ENCODE measurements at regions of chr19 and their contacts with region 1.

Region 1: GRCh38 chr19:19192078-19192882 is at the starts of genes BORCS8 and RFXANK:
- DNase-seq: peak; percentile 97
- ATAC-seq: peak; percentile 94
- H3K4me3 ChIP-seq: peak within 1 kb of the TSS; percentile 85
- H3K27ac ChIP-seq: peak within 1 kb of the TSS; percentile 97
- H3K4me1 ChIP-seq: peaks cover 11% of the 10 kb centered on the region
- H3K27me3 ChIP-seq: no peaks in the 10 kb centered on the region
- CTCF ChIP-seq: no peak
- EP300 ChIP-seq: no peak
- POLR2A ChIP-seq: peak; percentile 86
- RAD21 ChIP-seq: no peak
- polyA plus RNA-seq, gene BORCS8: 3.7 to 6.0 TPM
- polyA plus RNA-seq, gene RFXANK: 70.8 TPM

Region 2: GRCh38 chr19:19203012-19203856 is 11.0 kb after region 1 on chr19 and contains the start of gene NR2C2AP:
- CTCF ChIA-PET with region 1: interaction called, 3 read pairs
- POLR2A ChIA-PET with region 1: interaction called, 25 read pairs
- RAD21 ChIA-PET with region 1: interaction called, 15 read pairs
- SMC1A ChIA-PET with region 1: interaction called, 12 read pairs
- in situ Hi-C with region 1: no loop called
- intact Hi-C with region 1: no loop called
- DNase-seq: peak; percentile 73
- ATAC-seq: peak; percentile 94
- H3K4me3 ChIP-seq: peak within 1 kb of the TSS; percentile 93
- H3K27ac ChIP-seq: peak within 1 kb of the TSS; percentile 75
- H3K4me1 ChIP-seq: peaks cover 8% of the 10 kb centered on the region; the same call in 1 of the 2 replicates
- H3K27me3 ChIP-seq: no peaks in the 10 kb centered on the region
- CTCF ChIP-seq: no peak
- EP300 ChIP-seq: no peak
- POLR2A ChIP-seq: peak; percentile 56; the same call in 1 of the 2 replicates
- RAD21 ChIP-seq: no peak
- polyA plus RNA-seq, gene NR2C2AP: 43.3 to 44.8 TPM

Region 3: DNA sequence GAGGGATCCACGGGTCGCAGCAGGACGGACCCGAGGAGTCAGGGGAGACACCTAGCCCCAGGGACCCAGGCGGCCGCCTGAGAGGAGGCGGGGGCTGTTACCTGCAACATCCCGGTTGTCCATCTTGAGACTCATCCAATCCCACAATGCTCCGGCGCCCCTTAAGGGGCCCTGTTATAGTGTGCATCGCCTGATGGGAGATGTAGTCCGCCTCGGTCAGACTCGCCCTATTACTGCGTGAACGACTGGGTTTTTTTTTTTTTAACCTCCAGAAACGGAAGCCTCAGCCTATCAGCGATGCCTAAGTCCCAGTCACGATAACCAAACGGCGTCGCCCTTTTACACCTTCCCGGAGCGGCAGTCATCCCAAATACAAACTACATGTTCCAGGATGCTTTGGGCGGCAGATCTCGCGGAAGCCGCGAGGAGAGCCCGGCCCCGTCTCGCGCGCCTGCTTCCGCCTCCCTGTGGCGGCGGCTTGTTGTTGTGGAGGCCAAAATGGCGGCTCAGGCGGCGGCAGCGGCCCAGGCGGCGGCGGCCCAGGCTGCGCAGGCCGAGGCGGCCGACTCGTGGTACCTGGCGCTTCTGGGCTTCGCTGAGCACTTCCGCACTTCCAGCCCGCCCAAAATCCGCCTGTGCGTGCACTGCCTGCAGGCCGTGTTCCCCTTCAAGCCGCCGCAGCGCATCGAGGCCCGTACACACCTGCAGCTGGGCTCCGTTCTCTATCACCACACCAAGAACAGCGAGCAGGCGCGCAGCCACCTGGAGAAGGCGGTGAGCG is 128.3 kb after region 1 on chr19 and contains the starts of genes MAU2 and SUGP1:
- CTCF ChIA-PET with region 1: no interaction called
- POLR2A ChIA-PET with region 1: no interaction called
- RAD21 ChIA-PET with region 1: no interaction called
- SMC1A ChIA-PET with region 1: interaction called, 3 read pairs
- in situ Hi-C with region 1: no loop called
- intact Hi-C with region 1: loop called (anchors 2 kb)
- DNase-seq: peak; percentile 80
- ATAC-seq: peak; percentile 96
- H3K4me3 ChIP-seq: peak within 1 kb of the TSS; percentile 98
- H3K27ac ChIP-seq: peak within 1 kb of the TSS; percentile 87
- H3K4me1 ChIP-seq: no peaks in the 10 kb centered on the region
- H3K27me3 ChIP-seq: no peaks in the 10 kb centered on the region
- CTCF ChIP-seq: peak in 2 of 3 experiments; percentile 12 to 21; a peak in 2 of 6 replicates
- EP300 ChIP-seq: no peak
- POLR2A ChIP-seq: peak; percentile 94
- RAD21 ChIP-seq: no peak
- polyA plus RNA-seq, gene MAU2: 1.8 to 2.9 TPM
- polyA plus RNA-seq, gene SUGP1: 1.6 to 3.6 TPM

Measured in GM12878 (cell line).